ENCODE measurements at regions of chr17 and their contacts with region 1.

Region 1: DNA sequence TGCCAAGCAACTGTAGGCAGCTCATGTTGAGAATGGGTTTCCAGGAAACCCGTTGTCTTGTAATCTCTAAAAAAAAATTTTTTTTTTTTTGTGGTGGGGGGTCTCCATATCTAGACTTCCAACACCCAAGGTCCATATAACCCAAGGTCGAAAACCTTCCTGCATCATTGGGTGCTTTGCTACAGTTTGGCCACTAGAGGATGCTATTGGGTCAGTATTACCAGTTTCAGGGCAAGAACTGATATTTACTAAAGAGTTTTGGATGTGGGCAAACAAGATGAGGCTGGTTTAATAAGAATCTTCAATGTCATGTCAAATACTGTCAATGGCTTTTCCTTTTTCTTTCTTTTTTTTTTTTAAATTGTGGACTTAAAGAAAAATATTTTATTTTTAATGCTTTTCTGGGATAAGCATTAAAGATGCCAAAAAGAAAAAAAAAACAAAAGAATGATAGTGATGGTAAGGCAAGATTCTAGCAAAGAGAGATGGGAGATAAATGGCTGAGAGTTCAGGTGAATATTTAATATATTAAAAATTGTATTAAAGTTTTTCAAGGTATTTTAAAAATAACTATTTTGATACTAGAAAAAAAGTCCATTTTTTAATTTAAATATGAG is 62.2 kb downstream of the DHRS7C start:
- DNase-seq: peak; percentile 49
- H3K4me3 ChIP-seq: no peak overlapping the region
- CTCF ChIP-seq: peak; percentile 100

Region 2: DNA sequence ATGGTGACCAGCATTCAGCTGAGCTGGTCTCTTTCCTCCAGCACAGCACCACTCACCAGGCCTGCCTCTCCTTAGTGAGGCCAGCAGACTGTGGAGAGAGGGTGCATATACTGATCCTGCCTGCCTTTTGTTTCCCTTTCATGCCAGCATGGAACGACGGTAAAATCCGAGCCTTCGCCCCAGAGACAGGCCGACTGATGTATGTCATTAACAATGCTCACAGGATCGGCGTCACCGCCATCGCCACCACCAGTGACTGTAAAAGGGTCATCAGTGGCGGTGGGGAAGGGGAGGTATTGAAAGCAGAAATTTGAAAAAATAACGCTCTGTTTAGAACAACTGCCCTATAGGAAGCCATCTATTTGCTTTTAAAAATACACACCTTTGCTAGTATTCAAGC is 96.4 kb before region 1 on chr17:
- in situ Hi-C with region 1: loop called (anchors 5 kb)
- DNase-seq: no peak
- H3K4me3 ChIP-seq: no peak overlapping the region
- CTCF ChIP-seq: no peak

Region 3: GRCh38 chr17:9676742-9677387 is 52.3 kb before region 1 on chr17:
- in situ Hi-C with region 1: loop called (anchors 5 kb)
- DNase-seq: peak; percentile 57
- H3K4me3 ChIP-seq: no peak overlapping the region
- CTCF ChIP-seq: no peak

Region 4: DNA sequence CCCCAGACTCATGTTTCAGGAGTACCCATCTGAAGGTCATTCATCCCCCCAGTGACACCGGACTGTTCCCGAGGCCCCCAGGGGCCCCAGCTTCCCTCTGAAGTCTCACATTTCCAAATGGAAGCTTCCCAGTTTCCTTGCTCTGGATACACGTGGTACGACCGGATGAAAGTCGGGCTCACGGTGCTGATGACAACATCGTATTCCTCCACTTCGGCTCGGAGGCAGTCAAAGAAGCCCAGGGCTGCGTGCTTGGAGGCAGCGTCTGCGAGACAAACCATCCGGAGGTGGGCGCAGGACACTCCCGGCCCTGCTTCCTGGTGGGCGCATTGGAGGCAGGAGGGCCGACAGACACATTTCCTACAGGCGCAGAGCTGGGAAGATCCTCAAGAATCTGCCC is 43.5 kb after region 1 on chr17:
- in situ Hi-C with region 1: loop called (anchors 5 kb)
- DNase-seq: no peak
- H3K4me3 ChIP-seq: no peak overlapping the region
- CTCF ChIP-seq: no peak

Measured in astrocyte of the cerebellum (primary cell).